Naive thymus-derived CD4-positive, alpha-beta T cell (primary cell): ENCODE measurements at regions of chr4 and their contacts with region 1.

Region 1: DNA sequence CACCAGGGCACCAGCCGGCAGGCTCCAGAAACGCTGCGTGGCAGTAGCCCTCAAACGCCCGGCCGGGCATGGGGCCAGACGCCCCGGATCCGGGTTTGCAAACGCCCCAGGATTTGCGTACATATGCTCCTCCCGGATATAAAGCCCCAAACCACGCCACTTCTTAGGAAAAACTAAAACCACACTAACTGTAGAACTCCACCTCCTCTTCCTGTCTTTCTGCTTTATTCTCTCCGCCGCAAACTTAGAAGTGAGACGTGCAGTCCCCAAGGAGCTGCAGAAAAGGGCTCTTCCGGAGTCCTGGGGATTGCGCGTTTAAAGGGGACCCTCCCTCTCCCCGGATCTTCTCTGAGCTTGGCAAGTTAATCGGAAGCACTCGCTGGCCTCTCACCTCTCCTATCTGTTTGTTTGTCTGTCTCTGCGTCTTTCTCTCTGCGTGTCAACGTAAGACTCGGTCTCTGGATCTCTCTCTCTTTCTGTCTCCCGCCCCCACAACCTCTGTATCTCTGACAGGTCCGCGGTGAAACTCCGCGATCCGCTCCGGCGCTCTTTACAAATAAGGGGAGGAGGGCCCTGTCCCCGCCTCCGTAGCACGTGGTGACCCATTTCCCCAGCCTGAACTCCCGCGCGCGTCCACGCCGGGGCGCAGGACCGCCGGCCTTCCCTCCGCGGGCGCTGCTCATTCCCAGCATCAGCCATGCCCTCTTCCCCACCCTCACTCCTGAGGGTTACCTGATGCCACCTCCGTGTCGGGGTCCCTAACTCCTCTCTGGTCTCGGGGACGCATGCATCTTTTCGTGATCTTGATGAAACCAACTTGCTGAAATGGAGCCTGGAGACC is at the start of gene SLC39A8:
- DNase-seq: peak; percentile 75 to 91 (median 89)
- ATAC-seq: peak; percentile 87
- H3K4me3 ChIP-seq: peak within 1 kb of the TSS; percentile 87
- H3K4me3 Mint-ChIP-seq: peak within 1 kb of the TSS; percentile 87 to 97 (median 90)
- H3K27ac ChIP-seq: peak within 1 kb of the TSS; percentile 95
- H3K27ac Mint-ChIP-seq: peak within 1 kb of the TSS; percentile 91 to 98 (median 95)
- H3K4me1 ChIP-seq: peaks cover 15 to 37% of the 10 kb centered on the region in 2 donors
- H3K4me1 Mint-ChIP-seq: peaks cover 24 to 51% (median 46%) of the 10 kb centered on the region in 7 donors
- H3K27me3 ChIP-seq: no peaks in the 10 kb centered on the region
- H3K27me3 Mint-ChIP-seq: peaks cover 0 to 7% (median 0%) of the 10 kb centered on the region in 5 donors
- total RNA-seq, gene SLC39A8: 15.1 to 99.5 (median 17.8) TPM

Region 2: GRCh38 chr4:101205916-101206315 is 1139.3 kb before region 1 on chr4:
- CTCF ChIA-PET with region 1: no interaction called
- POLR2A ChIA-PET with region 1: no interaction called
- intact Hi-C with region 1: loop called in 1 of 2 experiments (anchors 2 kb)
- DNase-seq: peak in 7 of 9 donors; percentile 10 to 44 (median 18)
- ATAC-seq: peak; percentile 96
- H3K4me3 ChIP-seq: no peak overlapping the region
- H3K4me3 Mint-ChIP-seq: peak overlapping the region in 9 of 10 donors; percentile 3 to 76 (median 55)
- H3K27ac ChIP-seq: no peak overlapping the region
- H3K27ac Mint-ChIP-seq: peak overlapping the region in 4 of 9 donors; percentile 13 to 83 (median 46)
- H3K4me1 ChIP-seq: peaks cover 12 to 17% of the 10 kb centered on the region in 2 donors
- H3K4me1 Mint-ChIP-seq: peaks cover 25 to 52% (median 34%) of the 10 kb centered on the region in 7 donors
- H3K27me3 ChIP-seq: no peaks in the 10 kb centered on the region
- H3K27me3 Mint-ChIP-seq: peaks cover 0 to 3% (median 0%) of the 10 kb centered on the region in 5 donors

Region 3: GRCh38 chr4:102312447-102312846 is 32.7 kb before region 1 on chr4:
- CTCF ChIA-PET with region 1: no interaction called
- POLR2A ChIA-PET with region 1: no interaction called
- intact Hi-C with region 1: no loop called
- DNase-seq: no peak
- ATAC-seq: no peak
- H3K4me3 ChIP-seq: no peak overlapping the region
- H3K4me3 Mint-ChIP-seq: no peak overlapping the region
- H3K27ac ChIP-seq: no peak overlapping the region
- H3K27ac Mint-ChIP-seq: no peak overlapping the region
- H3K4me1 ChIP-seq: no peaks in the 10 kb centered on the region
- H3K4me1 Mint-ChIP-seq: peaks cover 18 to 43% (median 35%) of the 10 kb centered on the region in 7 donors
- H3K27me3 ChIP-seq: no peaks in the 10 kb centered on the region
- H3K27me3 Mint-ChIP-seq: no peaks in the 10 kb centered on the region

Region 4: GRCh38 chr4:102430461-102430910 is 85.3 kb after region 1 on chr4:
- CTCF ChIA-PET with region 1: interaction called, 3 read pairs
- POLR2A ChIA-PET with region 1: interaction called, 10 read pairs
- intact Hi-C with region 1: loop called (anchors 1 kb)
- DNase-seq: no peak
- ATAC-seq: no peak
- H3K4me3 ChIP-seq: peak overlapping the region; percentile 72
- H3K4me3 Mint-ChIP-seq: peak overlapping the region; percentile 75 to 92 (median 88)
- H3K27ac ChIP-seq: peak overlapping the region; percentile 67
- H3K27ac Mint-ChIP-seq: peak overlapping the region in 8 of 9 donors; percentile 26 to 92 (median 80)
- H3K4me1 ChIP-seq: no peaks in the 10 kb centered on the region
- H3K4me1 Mint-ChIP-seq: peaks cover 0 to 19% (median 5%) of the 10 kb centered on the region in 7 donors
- H3K27me3 ChIP-seq: no peaks in the 10 kb centered on the region
- H3K27me3 Mint-ChIP-seq: peaks cover 0 to 16% (median 0%) of the 10 kb centered on the region in 5 donors

Region 5: DNA sequence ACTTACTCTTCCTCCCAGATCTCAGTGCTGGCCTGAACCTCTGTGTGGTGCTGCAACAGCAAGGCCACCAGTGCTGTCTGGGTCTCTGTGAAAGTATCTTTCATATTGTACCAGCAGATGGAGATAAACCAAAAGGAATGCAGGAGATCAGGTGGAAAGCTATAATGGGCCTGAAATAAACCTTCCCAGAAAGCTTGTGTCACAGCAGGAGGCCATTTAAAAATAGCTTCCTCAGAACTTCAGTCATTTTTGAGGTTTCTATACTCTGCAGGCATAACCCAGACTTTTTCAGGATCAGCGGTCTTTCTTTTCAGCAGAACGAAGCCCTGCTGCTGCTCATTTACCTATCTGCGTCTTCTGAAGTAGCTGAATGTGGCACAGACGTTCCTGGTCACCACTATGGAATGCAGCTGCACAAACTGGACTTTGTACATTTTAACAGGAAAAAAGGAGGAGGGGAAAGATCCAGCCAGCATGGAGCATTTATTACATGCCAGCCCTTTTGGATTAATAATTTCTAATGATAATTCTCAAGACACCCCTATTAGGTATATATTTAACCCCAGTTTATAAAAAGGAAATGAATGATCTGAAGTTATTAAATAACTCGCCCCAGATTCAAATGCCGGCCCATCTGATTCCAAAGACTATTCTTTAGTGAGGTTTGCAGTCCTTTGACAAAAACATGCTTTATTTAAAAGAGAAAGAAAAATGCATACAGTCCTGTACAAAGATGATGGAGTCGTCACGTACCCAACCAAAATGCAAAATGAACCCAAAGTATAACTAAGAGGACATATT is 275.7 kb after region 1 on chr4:
- CTCF ChIA-PET with region 1: no interaction called
- POLR2A ChIA-PET with region 1: interaction called, 3 read pairs
- intact Hi-C with region 1: loop called in 1 of 2 experiments (anchors 1 kb)
- DNase-seq: peak in 2 of 9 donors; percentile 34 to 45
- ATAC-seq: peak; percentile 65
- H3K4me3 ChIP-seq: no peak overlapping the region
- H3K4me3 Mint-ChIP-seq: peak overlapping the region in 3 of 10 donors; percentile 9 to 42 (median 32)
- H3K27ac ChIP-seq: no peak overlapping the region
- H3K27ac Mint-ChIP-seq: peak overlapping the region in 7 of 9 donors; percentile 20 to 85 (median 59)
- H3K4me1 ChIP-seq: peaks cover 7 to 18% of the 10 kb centered on the region in 2 donors
- H3K4me1 Mint-ChIP-seq: peaks cover 15 to 73% (median 46%) of the 10 kb centered on the region in 7 donors
- H3K27me3 ChIP-seq: no peaks in the 10 kb centered on the region
- H3K27me3 Mint-ChIP-seq: no peaks in the 10 kb centered on the region

Region 6: DNA sequence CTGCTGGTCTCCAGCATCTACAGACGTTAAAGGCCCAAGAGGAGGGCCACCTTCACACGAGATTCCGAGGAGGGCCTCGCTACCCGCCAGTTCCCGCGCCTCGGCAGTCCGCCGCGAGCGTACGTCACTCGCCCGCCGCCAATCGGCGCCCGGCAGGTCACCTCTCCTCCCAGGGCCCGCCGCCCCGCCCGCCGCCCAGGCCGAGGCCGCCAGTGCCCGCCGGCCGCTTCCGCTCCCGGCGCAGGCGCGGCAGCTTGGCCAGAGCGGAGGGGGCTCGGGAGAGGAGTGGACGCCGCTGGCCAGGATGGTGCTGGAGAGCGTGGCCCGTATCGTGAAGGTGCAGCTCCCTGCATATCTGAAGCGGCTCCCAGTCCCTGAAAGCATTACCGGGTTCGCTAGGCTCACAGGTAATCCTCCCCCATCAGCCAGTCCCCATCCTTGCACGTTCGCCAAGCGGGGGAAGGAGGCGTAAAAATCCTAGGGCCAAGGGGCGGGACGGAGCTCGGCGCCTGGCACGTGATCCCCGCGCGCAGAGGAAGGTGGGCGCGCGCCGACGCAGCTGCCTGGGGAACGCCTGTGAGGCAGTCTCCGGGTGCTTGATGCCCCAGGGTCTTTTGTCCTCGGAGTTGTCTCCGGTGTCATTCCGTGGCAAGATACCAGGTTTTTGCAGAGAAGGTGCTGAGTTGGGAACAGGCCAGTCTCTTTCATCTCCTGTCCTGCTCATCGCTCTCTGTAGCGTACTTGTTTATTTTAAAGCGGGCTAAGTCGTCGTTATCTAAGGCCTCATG is 523.8 kb after region 1 on chr4 and contains the start of gene CISD2:
- CTCF ChIA-PET with region 1: no interaction called
- POLR2A ChIA-PET with region 1: interaction called, 4 read pairs
- intact Hi-C with region 1: loop called (anchors 1 kb)
- DNase-seq: peak; percentile 87 to 95 (median 92)
- ATAC-seq: peak; percentile 90
- H3K4me3 ChIP-seq: peak within 1 kb of the TSS; percentile 95
- H3K4me3 Mint-ChIP-seq: peak within 1 kb of the TSS; percentile 88 to 100 (median 96)
- H3K27ac ChIP-seq: peak within 1 kb of the TSS; percentile 99
- H3K27ac Mint-ChIP-seq: peak within 1 kb of the TSS; percentile 98 to 100 (median 99)
- H3K4me1 ChIP-seq: peaks cover 16 to 28% of the 10 kb centered on the region in 2 donors
- H3K4me1 Mint-ChIP-seq: peaks cover 32 to 80% (median 71%) of the 10 kb centered on the region in 7 donors
- H3K27me3 ChIP-seq: no peaks in the 10 kb centered on the region
- H3K27me3 Mint-ChIP-seq: no peaks in the 10 kb centered on the region
- total RNA-seq, gene CISD2: 11.4 to 50.3 (median 13.4) TPM

Region 7: DNA sequence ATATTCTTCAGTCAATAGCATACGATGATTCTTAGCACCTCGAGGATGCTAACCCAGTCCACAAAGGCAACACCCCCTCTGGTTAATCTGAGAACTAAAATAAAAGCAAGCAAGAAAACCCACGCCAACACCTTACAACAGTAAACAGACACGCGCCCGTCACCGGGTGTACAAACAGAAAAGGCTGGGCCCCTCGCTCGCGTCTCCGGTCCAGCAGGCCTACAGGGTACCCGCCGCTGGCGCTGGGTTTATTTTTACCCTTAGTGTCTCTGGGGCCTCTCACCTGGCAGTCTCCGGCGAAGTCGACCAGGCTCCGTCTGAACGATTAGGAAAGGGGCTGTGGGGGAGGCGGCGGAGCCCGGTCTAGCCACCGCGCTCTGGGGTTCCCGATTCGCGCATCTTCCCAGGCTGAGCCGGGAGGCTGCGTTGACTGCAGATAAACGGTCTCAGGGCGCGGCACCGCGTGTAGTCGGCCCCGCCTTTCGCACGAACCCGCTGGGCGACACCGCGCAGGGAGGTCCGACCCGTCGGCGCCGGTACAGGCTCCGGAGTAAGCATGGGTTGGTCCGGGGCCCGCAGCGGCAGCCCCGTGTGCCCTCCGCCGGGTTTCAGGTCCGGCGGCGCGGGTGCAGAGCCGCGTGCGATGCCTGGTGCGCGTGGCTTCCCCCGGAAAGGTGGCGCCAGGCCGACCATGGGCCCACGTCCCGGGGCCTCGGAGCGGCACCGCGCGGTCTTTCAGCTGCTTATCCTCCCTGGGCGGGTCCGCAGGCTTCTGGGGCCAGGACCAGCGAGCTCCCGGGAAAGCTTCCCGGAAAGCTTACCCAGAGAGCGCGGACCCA is 730.9 kb after region 1 on chr4:
- CTCF ChIA-PET with region 1: no interaction called
- POLR2A ChIA-PET with region 1: interaction called, 4 read pairs
- intact Hi-C with region 1: loop called (anchors 1 kb)
- DNase-seq: peak; percentile 53 to 75 (median 68)
- ATAC-seq: peak; percentile 83
- H3K4me3 ChIP-seq: peak overlapping the region; percentile 74
- H3K4me3 Mint-ChIP-seq: peak overlapping the region; percentile 77 to 97 (median 95)
- H3K27ac ChIP-seq: peak overlapping the region; percentile 87
- H3K27ac Mint-ChIP-seq: peak overlapping the region; percentile 86 to 99 (median 97)
- H3K4me1 ChIP-seq: peaks cover 10 to 17% of the 10 kb centered on the region in 2 donors
- H3K4me1 Mint-ChIP-seq: peaks cover 23 to 54% (median 47%) of the 10 kb centered on the region in 7 donors
- H3K27me3 ChIP-seq: no peaks in the 10 kb centered on the region
- H3K27me3 Mint-ChIP-seq: no peaks in the 10 kb centered on the region